Vagina (tissue), 2 donors: ENCODE measurements at regions of chr12 and their contacts with region 1.

Region 1: DNA sequence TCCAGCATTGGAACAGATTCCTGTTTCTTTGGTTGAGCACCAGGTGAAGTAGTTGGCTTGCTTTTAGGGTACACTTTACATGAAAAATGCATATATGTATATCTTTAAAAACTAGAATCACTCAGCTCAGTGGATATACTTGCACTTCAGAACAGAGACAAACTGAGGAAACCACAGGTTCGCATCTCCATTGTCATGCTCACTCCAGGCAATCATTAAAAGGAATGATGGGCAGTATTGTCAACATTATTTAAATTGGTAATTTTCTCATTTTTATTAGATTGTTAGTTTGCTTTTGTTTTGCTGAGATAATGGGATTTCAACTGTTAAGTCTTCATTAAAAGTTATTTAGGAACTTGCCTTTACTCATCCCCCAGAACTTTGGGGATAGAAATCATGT is 71.0 kb upstream of the NELL2 start:
- DNase-seq: no peak
- H3K4me3 ChIP-seq: no peak overlapping the region
- H3K27ac ChIP-seq: no peak overlapping the region
- H3K4me1 ChIP-seq: no peaks in the 10 kb centered on the region
- H3K27me3 ChIP-seq: no peaks in the 10 kb centered on the region
- CTCF ChIP-seq: no peak
- POLR2A ChIP-seq: no peak

Region 2: DNA sequence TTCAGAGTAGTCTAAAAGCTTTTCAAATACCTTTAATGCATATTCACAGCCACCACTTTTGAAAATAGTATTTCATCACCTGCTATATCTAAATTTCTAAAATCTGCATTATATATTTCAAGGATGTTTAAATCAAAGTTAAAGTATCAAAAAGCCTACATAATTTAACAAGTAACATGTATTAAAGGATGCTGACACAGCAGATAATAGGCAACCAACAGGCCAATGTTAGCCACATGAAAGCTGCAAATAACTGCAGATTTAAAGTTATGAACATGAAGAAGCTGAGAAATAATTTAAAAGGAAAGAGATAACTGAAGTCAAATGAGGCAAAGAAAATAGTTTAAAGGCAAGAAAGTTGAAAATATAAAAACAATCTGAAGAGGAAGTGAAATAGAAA is 31.2 kb before region 1 on chr12:
- intact Hi-C with region 1: loop called (anchors 2 kb)
- DNase-seq: no peak
- H3K4me3 ChIP-seq: no peak overlapping the region
- H3K27ac ChIP-seq: no peak overlapping the region
- H3K4me1 ChIP-seq: no peaks in the 10 kb centered on the region
- H3K27me3 ChIP-seq: no peaks in the 10 kb centered on the region
- CTCF ChIP-seq: no peak
- POLR2A ChIP-seq: no peak